Activated naive CD8-positive, alpha-beta T cell treated with anti-CD3 and anti-CD28 coated beads, Interleukin-2, amount 10 ng/mL, durations not matched to agents 7 days and 5 days (primary cell): ENCODE measurements at regions of chr22 and their contacts with region 1.

Region 1: GRCh38 chr22:26483439-26484359 is at the starts of genes HPS4 and SRRD:
- DNase-seq: peak; percentile 99
- ATAC-seq: peak; percentile 74
- H3K4me3 Mint-ChIP-seq: peak within 1 kb of the TSS; percentile 86
- H3K27ac Mint-ChIP-seq: peak within 1 kb of the TSS; percentile 88
- H3K4me1 Mint-ChIP-seq: peaks cover 52% of the 10 kb centered on the region
- H3K27me3 Mint-ChIP-seq: no peaks in the 10 kb centered on the region
- total RNA-seq, gene HPS4: 42.6 to 48.2 TPM
- total RNA-seq, gene SRRD: 18.9 to 19.2 TPM

Region 2: GRCh38 chr22:26428515-26429457 is 54.9 kb before region 1 on chr22 and contains the start of gene ASPHD2:
- POLR2A ChIA-PET with region 1: interaction called, 22 read pairs
- DNase-seq: peak; percentile 87
- ATAC-seq: peak; percentile 86
- H3K4me3 Mint-ChIP-seq: peak within 1 kb of the TSS; percentile 99
- H3K27ac Mint-ChIP-seq: peak within 1 kb of the TSS; percentile 100
- H3K4me1 Mint-ChIP-seq: peaks cover 44% of the 10 kb centered on the region
- H3K27me3 Mint-ChIP-seq: peaks cover 8% of the 10 kb centered on the region
- total RNA-seq, gene ASPHD2: 9.0 to 9.3 TPM

Region 3: GRCh38 chr22:26502688-26503561 is 19.2 kb after region 1 on chr22:
- POLR2A ChIA-PET with region 1: interaction called, 10 read pairs
- DNase-seq: peak; percentile 76
- ATAC-seq: peak; percentile 95
- H3K4me3 Mint-ChIP-seq: peak overlapping the region; percentile 62
- H3K27ac Mint-ChIP-seq: peak overlapping the region; percentile 88
- H3K4me1 Mint-ChIP-seq: peaks cover 22% of the 10 kb centered on the region
- H3K27me3 Mint-ChIP-seq: no peaks in the 10 kb centered on the region